ENCODE measurements at regions of chr17 and their contacts with region 1.

Region 1: DNA sequence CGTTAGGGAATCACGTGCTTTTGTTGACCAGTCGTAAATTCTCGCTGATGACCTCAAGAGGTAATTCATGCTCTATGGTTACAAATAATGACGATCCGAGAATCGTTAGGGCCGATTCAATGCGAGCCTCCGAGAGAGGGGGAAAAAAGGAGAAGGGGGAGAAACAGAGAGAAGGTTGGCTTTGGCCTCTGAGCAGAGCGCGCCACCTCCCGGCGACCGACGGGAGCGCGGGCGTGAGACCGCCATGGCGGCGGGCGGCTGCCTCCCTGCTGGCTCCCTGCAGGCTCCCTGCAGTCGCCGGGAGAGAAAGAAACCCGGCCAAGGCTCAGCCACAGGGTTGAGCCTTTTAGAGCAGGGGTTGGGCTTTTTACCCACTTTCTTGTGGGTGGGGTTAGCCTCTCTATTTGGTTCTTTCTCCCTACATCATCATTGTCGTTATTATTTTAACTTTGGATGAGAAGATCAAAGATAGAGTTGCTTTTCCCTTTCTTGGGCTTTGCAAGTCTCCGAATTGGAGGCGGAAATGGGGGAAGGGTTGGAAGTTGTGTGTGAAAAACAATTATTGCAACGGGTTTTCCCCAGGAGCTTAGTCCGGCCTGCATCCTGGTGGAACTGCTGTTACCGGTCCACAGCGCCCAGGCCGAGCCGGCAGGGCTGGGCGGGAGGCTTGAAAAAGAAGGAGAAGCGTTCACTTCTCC is 410 bp upstream of the HOXB5 start:
- DNase-seq: peak; percentile 53 to 66 (median 54)
- H3K4me3 ChIP-seq: no peak overlapping the region
- H3K4me3 Mint-ChIP-seq: peak overlapping the region in 1 of 2 donors; percentile 92
- H3K27ac ChIP-seq: no peak overlapping the region
- H3K27ac Mint-ChIP-seq: no peak overlapping the region
- H3K4me1 ChIP-seq: peaks cover 27 to 38% of the 10 kb centered on the region in 2 donors
- H3K4me1 Mint-ChIP-seq: peaks cover 50% of the 10 kb centered on the region
- H3K27me3 ChIP-seq: peaks cover 78 to 100% of the 10 kb centered on the region in 2 donors
- H3K27me3 Mint-ChIP-seq: peaks cover 99 to 100% (median 100%) of the 10 kb centered on the region in 3 donors
- CTCF ChIP-seq: peak; percentile 82

Region 2: GRCh38 chr17:48335858-48336500 is 258.0 kb before region 1 on chr17:
- intact Hi-C with region 1: loop called (anchors 5 kb)
- DNase-seq: peak; percentile 11 to 43 (median 31)
- H3K4me3 ChIP-seq: no peak overlapping the region
- H3K4me3 Mint-ChIP-seq: no peak overlapping the region
- H3K27ac ChIP-seq: no peak overlapping the region
- H3K27ac Mint-ChIP-seq: no peak overlapping the region
- H3K4me1 ChIP-seq: no peaks in the 10 kb centered on the region
- H3K4me1 Mint-ChIP-seq: peaks cover 4% of the 10 kb centered on the region
- H3K27me3 ChIP-seq: peaks cover 6 to 34% of the 10 kb centered on the region in 2 donors
- H3K27me3 Mint-ChIP-seq: peaks cover 9 to 21% (median 9%) of the 10 kb centered on the region in 3 donors
- CTCF ChIP-seq: peak; percentile 79

Region 3: DNA sequence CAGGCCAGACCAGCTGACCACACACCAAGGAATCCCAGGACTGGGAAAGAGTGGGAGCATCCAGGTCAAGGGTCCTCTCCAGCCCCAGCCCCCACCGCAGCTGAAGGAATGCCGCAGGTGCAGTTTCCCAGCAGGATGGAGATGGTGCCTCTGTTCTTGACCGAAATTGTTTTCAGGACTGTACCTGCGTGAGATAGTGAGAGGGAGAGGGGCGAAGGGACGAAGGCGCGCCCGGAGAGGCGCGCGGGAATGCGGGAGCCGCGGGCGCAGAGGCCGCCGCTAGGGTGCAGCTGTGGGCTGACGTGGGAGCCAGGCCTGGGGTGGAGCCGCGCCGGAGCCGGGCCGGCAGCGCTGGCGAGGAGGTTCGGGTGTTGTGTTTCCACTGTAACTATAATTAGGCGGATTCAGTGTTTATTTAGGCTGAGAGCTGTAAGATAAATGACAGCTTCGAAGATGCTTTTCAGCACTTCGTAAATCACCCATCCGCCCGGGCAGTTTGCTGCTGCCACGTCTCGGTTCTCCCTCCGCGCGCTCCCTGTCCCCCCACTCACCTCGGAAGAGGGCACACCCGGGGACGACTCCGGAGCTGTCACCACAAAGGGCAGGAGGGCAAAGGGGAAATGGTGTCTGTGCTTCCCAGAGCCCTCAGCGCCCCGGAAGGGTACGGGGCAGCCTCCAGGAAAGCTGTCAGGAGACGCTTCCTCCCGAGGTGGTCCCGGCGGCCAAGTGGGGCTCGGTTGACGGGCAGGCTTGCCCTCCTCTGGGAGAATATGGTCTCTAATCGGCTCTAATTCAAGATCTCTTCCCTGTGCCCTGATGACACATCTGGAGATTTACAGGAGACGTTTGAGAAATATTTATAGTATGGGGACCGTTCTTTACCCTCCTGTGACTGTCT is 101.3 kb before region 1 on chr17:
- intact Hi-C with region 1: loop called in 1 of 2 experiments (anchors 5 kb)
- DNase-seq: peak; percentile 13 to 34 (median 18)
- H3K4me3 ChIP-seq: peak overlapping the region in 1 of 3 experiments; percentile 58
- H3K4me3 Mint-ChIP-seq: peak overlapping the region; percentile 47 to 68
- H3K27ac ChIP-seq: no peak overlapping the region
- H3K27ac Mint-ChIP-seq: no peak overlapping the region
- H3K4me1 ChIP-seq: peaks cover 9 to 10% of the 10 kb centered on the region in 2 donors
- H3K4me1 Mint-ChIP-seq: peaks cover 13% of the 10 kb centered on the region
- H3K27me3 ChIP-seq: peaks cover 18 to 50% of the 10 kb centered on the region in 2 donors
- H3K27me3 Mint-ChIP-seq: peaks cover 52 to 79% (median 55%) of the 10 kb centered on the region in 3 donors
- CTCF ChIP-seq: peak; percentile 65

Region 4: DNA sequence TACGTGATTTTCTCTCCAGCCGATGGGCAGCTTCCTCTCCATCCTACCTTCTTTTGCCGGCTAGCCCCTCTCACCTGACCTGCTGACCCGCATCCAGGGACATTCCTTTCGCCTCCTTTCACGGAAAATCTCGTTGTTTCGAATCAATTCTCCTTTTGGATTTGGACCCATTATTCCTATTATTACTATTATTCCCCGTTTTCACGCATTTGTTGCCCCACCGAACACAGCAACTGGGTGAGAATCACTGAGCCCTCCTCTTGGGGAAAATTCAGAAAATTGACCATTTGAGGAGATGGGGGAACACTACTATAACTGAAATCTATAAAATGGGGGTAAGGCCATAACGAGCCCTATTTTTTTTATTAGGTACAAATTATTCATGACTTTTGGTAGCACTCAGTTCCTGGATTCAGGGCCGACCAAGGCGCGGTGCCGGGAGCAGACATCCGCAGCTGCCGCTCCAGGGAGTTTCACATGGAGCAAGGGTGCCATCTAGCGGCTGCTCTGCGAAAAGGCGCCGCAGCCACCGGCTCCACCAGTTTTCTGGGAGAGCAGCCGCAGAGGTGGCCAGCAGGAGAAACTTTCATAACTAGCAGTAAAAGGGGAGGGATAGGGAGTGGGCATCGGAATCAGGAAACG is 24.4 kb after region 1 on chr17:
- intact Hi-C with region 1: loop called in 1 of 2 experiments (anchors 2 kb)
- DNase-seq: peak; percentile 68 to 75 (median 70)
- H3K4me3 ChIP-seq: no peak overlapping the region
- H3K4me3 Mint-ChIP-seq: peak overlapping the region in 1 of 2 donors; percentile 84
- H3K27ac ChIP-seq: no peak overlapping the region
- H3K27ac Mint-ChIP-seq: no peak overlapping the region
- H3K4me1 ChIP-seq: peaks cover 4 to 7% of the 10 kb centered on the region in 2 donors
- H3K4me1 Mint-ChIP-seq: peaks cover 13% of the 10 kb centered on the region
- H3K27me3 ChIP-seq: peaks cover 86 to 100% of the 10 kb centered on the region in 2 donors
- H3K27me3 Mint-ChIP-seq: peaks cover 99 to 100% (median 99%) of the 10 kb centered on the region in 3 donors
- CTCF ChIP-seq: peak; percentile 98